ENCODE measurements at regions of chr17 and their contacts with region 1.

Region 1: DNA sequence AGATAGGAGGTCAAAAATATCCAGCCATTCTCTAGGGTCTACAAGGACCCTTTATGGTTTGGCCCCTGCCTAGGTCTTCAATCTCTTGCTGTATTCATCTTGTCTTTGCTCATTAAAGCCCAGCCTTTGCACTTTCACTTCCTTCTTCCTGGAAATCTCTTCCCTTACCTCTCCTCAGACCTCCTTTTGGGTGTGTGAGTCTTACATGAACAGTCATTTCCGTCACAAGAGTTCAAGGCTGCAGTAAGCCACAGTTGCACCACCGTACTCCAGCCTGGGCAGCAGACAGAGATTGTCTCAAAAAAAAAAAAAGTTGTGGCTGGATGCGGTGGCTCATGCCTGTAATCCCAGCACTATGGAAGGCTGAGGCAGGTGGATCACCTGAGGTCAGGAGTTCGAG is 6.0 kb upstream of the ATP1B2 start:
- DNase-seq: no peak
- ATAC-seq: no peak
- H3K4me3 Mint-ChIP-seq: no peak overlapping the region
- H3K27ac Mint-ChIP-seq: no peak overlapping the region
- H3K4me1 Mint-ChIP-seq: peaks cover 3% of the 10 kb centered on the region
- H3K27me3 Mint-ChIP-seq: peaks cover 7% of the 10 kb centered on the region
- CTCF ChIP-seq: no peak

Region 2: GRCh38 chr17:7632492-7632894 is 12.3 kb before region 1 on chr17:
- CTCF ChIA-PET with region 1: interaction called, 16 read pairs
- POLR2A ChIA-PET with region 1: interaction called, 3 read pairs
- intact Hi-C with region 1: no loop called
- DNase-seq: peak; percentile 60
- ATAC-seq: peak; percentile 48
- H3K4me3 Mint-ChIP-seq: no peak overlapping the region
- H3K27ac Mint-ChIP-seq: no peak overlapping the region
- H3K4me1 Mint-ChIP-seq: peaks cover 3% of the 10 kb centered on the region
- H3K27me3 Mint-ChIP-seq: no peaks in the 10 kb centered on the region
- CTCF ChIP-seq: peak; percentile 56